K562 (cell line): ENCODE measurements at regions of chr4 and their contacts with region 1.

Region 1: DNA sequence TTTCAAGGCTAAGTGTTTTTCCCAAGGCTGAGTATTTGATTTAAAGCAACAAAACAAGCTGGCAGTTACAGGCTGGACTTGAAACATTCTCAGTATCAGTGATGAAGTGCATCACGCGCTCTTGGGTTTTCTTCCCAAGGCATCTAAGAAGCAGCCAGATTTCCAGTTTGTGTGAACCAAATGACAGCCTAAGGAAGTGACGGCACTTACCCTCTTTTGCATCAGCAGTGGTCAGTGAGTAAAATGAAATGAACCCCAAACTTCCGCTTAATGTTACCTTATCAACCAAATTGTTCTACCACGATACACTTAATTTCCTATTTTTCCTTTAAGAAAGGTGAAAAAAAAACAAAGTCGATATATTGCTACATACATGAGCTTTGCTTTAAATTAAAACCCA is 15.8 kb upstream of the GYPE start:
- DNase-seq: no peak
- ATAC-seq: no peak
- H3K4me3 ChIP-seq: no peak overlapping the region
- H3K27ac ChIP-seq: no peak overlapping the region
- H3K4me1 ChIP-seq: no peaks in the 10 kb centered on the region
- H3K27me3 ChIP-seq: no peaks in the 10 kb centered on the region
- CTCF ChIP-seq: no peak
- EP300 ChIP-seq: no peak
- POLR2A ChIP-seq: no peak
- RAD21 ChIP-seq: no peak

Region 2: GRCh38 chr4:143782521-143782920 is 138.7 kb before region 1 on chr4:
- CTCF ChIA-PET with region 1: no interaction called
- POLR2A ChIA-PET with region 1: no interaction called
- in situ Hi-C with region 1: loop called (anchors 25 kb)
- intact Hi-C with region 1: no loop called
- DNase-seq: no peak
- ATAC-seq: no peak
- H3K4me3 ChIP-seq: no peak overlapping the region
- H3K27ac ChIP-seq: no peak overlapping the region
- H3K4me1 ChIP-seq: no peaks in the 10 kb centered on the region
- H3K27me3 ChIP-seq: no peaks in the 10 kb centered on the region
- CTCF ChIP-seq: no peak
- EP300 ChIP-seq: no peak
- POLR2A ChIP-seq: no peak
- RAD21 ChIP-seq: no peak

Region 3: DNA sequence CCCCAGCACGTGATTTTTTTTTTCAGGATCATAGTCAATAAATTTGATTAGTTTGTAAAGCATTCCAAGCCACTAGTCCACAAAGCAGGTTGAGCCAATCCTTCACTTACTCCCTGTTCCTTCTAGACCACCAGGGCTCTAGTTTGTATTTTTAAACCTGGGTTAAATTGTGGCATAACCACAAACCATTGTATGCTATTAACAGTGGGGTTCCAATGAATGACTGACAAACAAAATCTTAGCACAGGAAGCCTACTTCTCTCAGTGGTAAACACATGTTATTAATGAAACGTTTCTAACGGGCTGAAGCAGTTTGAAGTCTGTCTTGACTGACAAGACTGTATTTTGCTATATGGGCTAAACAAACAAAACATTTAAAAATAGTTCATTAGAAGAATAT is 267.9 kb after region 1 on chr4:
- CTCF ChIA-PET with region 1: no interaction called
- POLR2A ChIA-PET with region 1: no interaction called
- in situ Hi-C with region 1: no loop called
- intact Hi-C with region 1: no loop called
- DNase-seq: no peak
- ATAC-seq: no peak
- H3K4me3 ChIP-seq: no peak overlapping the region
- H3K27ac ChIP-seq: no peak overlapping the region
- H3K4me1 ChIP-seq: no peaks in the 10 kb centered on the region
- H3K27me3 ChIP-seq: no peaks in the 10 kb centered on the region; a peak in 1 of 5 replicates
- CTCF ChIP-seq: no peak
- EP300 ChIP-seq: no peak
- POLR2A ChIP-seq: no peak
- RAD21 ChIP-seq: no peak